ENCODE measurements at regions of chr4 and their contacts with region 1.

Region 1: DNA sequence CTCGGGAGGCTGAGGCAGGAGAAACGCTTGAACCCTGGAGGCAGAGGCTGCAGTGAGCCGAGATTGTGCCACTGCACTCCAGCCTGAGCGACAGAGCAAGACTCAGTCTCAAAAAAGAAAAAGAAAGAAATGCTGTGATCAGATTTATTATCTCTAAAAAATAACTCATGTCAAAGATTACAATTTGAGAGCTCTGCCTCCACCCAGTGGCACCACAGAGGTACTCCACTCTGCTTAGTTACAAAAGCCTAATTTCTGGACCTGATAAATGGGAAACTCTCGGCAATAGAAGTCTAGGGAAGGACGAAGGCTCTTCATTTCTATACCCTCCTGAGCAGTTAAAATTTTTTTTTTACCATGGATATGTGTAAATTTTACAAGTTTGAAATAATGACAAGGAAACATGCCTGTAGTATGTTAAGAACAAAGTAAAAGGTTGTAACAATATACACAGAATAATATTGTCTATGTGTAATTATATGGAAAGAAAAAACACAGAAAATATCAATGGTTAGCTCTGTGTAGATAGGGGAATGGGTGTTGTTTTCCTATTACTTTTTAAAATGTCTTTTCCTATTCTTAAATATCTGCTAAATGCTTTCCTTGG is 149.8 kb downstream of the STIM2 start:
- DNase-seq: peak; percentile 31
- ATAC-seq: peak; percentile 81 to 87

Region 2: GRCh38 chr4:26028793-26029567 is 981.5 kb before region 1 on chr4:
- intact Hi-C with region 1: loop called in 1 of 2 experiments (anchors 10 kb)
- DNase-seq: peak; percentile 78
- ATAC-seq: peak; percentile 93 to 94

Region 3: DNA sequence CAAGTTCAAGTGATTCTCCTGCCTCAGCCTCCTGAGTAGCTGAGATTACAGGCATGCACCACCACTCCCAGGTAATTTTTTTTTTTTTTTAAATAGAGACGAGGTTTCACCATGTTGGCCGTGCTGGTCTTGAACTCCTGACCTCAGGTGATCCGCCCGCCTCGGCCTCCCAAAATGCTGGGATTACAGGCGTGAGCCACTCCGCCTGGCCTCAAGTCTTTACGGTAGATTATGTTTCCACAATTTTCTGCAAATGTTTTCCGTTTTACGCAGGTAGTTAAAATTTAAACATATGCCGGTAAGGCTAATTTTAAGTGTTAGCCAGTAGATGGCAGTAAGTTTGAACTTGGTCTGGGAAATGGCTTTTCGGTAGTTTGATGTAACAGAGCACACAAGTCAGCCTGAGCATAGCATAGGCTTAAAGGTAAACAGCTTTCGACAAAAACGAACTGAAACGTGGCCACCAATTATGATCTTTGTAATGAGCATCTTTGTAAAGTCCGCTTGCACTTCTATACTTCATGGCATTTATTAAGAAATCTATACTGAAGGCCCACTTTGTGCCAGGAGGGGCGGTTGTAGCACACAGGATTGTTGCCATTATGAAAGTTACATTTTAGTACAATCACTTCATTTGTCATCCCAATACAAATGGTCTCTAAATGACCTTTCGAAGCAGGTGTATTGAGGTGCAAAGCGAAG is 551.2 kb before region 1 on chr4:
- intact Hi-C with region 1: loop called in 1 of 2 experiments (anchors 2 kb)
- DNase-seq: no peak
- ATAC-seq: peak; percentile 53 to 59

Region 4: DNA sequence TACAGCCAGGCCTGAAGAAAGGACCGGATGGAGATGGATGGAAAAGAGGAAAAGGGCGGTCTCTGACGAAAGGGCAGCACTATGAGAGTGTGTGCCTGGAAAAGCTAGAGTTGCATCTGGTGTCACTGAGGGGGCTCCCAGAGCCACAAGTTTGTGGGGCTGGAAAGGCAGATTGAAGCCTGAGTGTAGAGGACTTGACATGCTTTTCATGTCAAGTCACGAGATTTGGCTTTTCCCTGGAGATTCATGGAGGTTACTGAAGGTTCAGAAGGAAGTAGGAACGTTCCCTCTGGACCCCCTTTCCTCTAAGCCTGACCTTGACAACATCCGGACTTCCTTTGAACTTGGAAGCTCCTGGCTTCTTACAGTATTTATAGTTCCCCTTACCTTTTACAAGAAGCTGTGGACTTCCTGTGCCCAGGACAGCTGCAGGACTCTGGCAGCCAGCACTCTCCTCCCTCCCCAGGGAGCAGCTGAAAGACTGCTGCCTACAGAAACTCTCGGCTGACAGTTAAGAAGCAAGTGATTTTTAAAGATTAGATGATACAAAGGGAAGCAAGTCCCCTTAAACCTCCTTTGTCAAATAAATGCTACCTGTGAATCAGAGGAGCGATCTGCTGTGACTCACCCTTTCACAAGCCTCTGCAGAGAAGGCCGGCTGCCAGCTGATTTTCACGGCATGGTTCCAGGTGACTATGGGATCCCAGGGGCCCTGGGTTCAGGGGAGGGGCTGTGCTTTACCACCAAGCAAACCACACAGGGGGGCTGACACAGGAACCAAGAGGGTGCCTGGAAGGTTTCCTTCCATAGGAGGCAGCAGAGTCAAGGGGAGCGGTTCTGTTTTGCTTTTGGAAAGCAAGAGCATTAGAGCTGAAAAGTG is 222.7 kb before region 1 on chr4:
- intact Hi-C with region 1: loop called in 1 of 2 experiments (anchors 10 kb)
- DNase-seq: peak; percentile 38
- ATAC-seq: peak; percentile 66 to 71